GM10248 (cell line): ENCODE measurements at regions of chr11 and their contacts with region 1.

Region 1: DNA sequence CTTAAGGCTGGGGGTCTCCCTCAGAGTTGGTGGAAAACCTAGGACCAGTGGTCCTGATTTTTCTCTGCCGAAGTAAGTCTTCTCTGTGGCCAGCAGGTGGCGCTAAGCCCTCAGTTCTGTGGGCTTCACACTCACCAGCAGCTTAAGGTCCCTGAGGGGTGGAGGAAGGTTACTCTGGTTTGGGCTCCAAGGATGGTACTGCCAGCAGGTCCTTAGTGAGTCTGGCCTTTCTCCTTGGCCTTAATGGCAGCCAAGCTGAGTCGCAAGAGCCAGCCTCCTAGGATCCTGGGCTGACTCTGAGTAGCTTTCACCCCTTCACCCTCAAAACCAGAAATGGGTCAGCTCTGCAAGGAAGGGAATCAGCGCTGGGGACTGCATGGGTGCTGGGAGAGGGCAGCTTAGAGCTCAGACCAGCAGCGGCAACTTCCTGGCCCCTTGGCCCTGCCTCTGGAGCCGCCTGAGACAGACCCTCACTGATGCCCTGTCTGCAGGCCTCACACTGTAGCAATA is 4.4 kb downstream of the KCNJ11 start:
- DNase-seq: peak; percentile 60
- CTCF ChIP-seq: peak; percentile 92

Region 2: DNA sequence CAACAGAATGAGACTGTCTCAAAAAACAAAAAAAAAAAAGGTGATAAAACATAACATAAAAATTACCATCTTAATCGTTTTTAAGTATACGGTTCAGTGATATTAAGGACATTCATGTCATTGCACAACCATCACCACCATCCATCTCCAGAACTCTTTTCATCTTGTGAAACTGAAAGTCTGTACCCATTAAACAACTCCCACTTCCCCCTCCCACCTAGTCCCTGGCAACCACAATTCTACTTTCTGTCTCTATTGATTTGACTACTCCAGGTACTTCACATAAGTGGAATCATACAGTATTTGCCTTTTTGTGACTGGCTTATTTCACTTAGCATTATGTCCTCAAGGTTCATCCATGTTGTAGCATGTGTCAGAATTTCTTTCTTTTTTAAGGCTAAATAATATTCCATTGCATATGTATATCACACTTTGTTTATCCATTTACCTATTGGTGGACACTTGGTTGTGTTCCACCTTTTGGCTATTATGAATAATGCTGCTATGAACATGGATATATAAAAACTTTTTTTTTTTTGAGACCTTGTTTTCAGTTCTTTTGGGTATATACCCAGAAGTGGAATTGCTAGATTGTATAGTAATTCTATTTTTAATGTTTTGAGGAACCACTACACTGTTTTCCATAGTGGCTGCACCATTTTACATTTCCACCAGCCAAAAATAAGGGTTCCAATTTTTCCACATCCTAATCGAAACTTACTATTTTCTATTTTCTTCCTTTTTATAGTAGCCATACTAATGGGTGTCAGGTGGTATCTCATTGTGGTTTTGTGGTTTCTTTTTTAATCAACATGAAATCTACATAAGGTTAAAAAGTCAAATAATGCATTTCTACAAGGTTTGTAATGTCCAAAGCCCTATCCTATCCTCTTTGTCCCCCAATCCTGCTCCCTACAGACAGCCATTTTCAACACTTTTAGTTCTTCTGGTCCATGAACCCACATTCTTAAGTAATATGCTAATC is 152.9 kb before region 1 on chr11:
- CTCF ChIA-PET with region 1: interaction called, 11 read pairs
- POLR2A ChIA-PET with region 1: no interaction called
- DNase-seq: no peak
- CTCF ChIP-seq: no peak

Region 3: GRCh38 chr11:17366495-17366894 is 17.6 kb before region 1 on chr11:
- CTCF ChIA-PET with region 1: interaction called, 23 read pairs
- POLR2A ChIA-PET with region 1: no interaction called
- DNase-seq: no peak
- CTCF ChIP-seq: no peak

Region 4: DNA sequence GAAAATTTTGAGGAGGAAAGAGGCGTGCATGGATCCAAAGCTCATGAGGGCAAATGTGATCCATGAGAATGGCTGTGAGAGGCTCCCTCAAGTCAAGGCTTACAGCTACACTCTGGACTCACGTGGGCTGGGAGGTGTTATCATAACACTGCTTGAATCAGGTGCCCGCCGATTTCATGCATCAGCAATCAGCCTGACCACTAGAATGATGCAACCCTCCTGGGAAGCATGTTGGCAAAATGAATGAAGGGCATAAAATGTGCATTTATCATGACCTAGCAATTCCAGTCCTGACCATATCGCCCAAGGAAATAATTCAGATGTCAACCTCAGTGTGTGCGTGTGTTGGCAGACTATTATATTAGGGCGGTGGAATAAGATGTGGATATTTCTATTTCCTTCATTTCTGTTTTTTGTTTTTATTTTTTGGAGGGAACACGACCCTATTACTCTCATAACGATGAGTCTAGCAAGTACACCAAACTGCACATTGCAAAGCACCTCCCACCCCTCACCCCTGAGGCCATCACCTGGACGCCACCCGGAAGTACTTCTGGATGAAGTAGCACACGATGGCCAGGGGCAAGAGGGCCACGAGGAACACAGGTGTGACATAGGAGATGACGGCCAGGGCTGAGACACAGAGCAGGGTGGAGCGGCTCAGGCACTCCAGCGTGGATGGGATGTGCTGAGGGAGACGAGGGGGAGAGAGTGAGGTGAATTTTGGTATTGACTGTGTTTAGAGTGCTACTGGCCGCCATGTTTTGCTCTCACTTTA is 20.1 kb after region 1 on chr11:
- CTCF ChIA-PET with region 1: interaction called, 51 read pairs
- POLR2A ChIA-PET with region 1: no interaction called
- DNase-seq: no peak
- CTCF ChIP-seq: no peak

Region 5: DNA sequence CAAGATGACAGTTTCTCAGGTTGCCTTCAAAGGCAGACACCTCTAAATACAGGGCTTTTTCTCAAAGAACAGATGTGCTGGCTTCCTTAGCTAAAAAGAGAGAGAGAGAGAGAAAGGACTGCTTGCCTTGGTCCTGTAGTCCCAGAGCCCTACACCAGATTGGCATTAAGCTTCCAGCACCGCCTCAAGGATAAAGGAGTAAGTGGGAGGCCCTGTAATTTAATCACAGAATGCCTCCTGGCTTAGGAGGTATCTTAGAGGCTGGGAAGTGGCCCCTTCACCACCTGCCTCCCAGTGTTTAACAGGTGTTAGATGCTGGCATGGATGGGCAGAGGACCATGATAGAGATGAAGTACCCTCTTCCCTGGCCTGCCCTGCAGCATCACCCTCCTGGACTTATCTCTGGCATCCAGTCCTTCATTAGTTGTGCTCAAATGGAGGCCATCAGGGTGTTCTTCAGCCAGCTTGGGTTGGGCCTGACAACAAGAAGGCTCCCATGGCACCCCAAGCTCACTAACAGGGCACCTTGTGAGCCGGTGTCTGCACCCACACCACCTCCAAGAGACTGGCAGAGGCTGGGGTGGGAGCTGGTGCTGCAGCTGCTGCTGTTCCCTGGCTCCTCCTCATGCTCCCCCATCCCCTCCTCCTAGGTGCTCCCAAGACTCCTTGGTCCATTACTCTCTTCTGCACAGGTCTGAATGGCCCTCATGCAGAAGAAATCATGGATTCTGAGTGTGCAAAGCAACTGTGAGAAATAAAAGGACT is 60.1 kb after region 1 on chr11:
- CTCF ChIA-PET with region 1: no interaction called
- POLR2A ChIA-PET with region 1: no interaction called
- DNase-seq: no peak
- CTCF ChIP-seq: no peak

Region 6: GRCh38 chr11:17504330-17505107 is 120.5 kb after region 1 on chr11:
- CTCF ChIA-PET with region 1: interaction called, 110 read pairs
- POLR2A ChIA-PET with region 1: no interaction called
- DNase-seq: peak; percentile 77
- CTCF ChIP-seq: peak; percentile 90